Activated CD8-positive, alpha-beta memory T cell treated with anti-CD3 and anti-CD28 coated beads, Interleukin-2, amount 10 ng/mL, durations not matched to agents 7 days and 5 days (primary cell): ENCODE measurements at regions of chr17 and their contacts with region 1.

Region 1: GRCh38 chr17:80855948-80856862 is 135.4 kb upstream of the CHMP6 start:
- DNase-seq: peak; percentile 98
- ATAC-seq: peak; percentile 98
- H3K4me3 Mint-ChIP-seq: peak overlapping the region; percentile 40
- H3K27ac Mint-ChIP-seq: peak overlapping the region; percentile 99
- H3K4me1 Mint-ChIP-seq: peaks cover 91% of the 10 kb centered on the region
- H3K27me3 Mint-ChIP-seq: no peaks in the 10 kb centered on the region

Region 2: GRCh38 chr17:80866147-80866793 is 10.1 kb after region 1 on chr17:
- CTCF ChIA-PET with region 1: interaction called, 10 read pairs
- DNase-seq: peak; percentile 88
- ATAC-seq: peak; percentile 71
- H3K4me3 Mint-ChIP-seq: no peak overlapping the region
- H3K27ac Mint-ChIP-seq: peak overlapping the region; percentile 78
- H3K4me1 Mint-ChIP-seq: peaks cover 88% of the 10 kb centered on the region
- H3K27me3 Mint-ChIP-seq: no peaks in the 10 kb centered on the region

Region 3: DNA sequence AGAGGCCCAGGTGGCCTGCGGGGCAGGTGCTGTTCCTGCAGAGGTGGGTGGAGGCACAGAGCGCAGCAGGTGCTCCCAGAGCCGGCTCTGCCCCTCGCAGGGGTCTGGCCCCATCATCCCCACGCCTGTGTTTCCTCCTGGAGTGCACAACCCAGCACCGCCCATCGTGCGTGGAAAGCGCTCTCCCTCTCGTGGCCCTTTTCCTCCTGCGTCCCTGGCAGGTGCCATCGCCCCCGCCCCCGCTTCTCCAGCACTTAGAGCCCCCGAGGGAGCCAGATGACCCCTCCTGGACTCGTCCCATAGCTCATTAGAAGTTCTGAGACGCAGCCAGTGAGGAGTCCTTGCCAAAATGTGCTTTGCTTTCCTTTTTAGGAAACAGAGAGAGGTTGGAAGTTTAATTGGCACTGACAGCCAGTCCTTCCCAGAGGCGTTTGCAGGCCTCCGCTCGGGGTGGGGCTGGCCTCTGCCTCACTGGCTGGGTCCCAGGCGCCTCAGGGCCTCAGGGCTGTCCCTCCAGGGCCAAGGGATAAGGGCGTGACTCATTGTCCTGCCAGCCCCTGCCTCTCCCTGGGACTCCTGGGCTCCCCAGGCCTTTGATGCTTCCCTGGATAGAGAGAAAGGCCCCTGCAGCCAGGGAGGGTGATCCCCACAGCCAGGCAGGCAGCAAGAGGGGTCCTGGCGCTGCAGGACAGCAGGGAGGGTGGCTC is 103.3 kb after region 1 on chr17:
- CTCF ChIA-PET with region 1: no interaction called
- DNase-seq: no peak
- ATAC-seq: no peak
- H3K4me3 Mint-ChIP-seq: no peak overlapping the region
- H3K27ac Mint-ChIP-seq: no peak overlapping the region
- H3K4me1 Mint-ChIP-seq: no peaks in the 10 kb centered on the region
- H3K27me3 Mint-ChIP-seq: no peaks in the 10 kb centered on the region